ENCODE measurements at regions of chr13 and their contacts with region 1.

Region 1: DNA sequence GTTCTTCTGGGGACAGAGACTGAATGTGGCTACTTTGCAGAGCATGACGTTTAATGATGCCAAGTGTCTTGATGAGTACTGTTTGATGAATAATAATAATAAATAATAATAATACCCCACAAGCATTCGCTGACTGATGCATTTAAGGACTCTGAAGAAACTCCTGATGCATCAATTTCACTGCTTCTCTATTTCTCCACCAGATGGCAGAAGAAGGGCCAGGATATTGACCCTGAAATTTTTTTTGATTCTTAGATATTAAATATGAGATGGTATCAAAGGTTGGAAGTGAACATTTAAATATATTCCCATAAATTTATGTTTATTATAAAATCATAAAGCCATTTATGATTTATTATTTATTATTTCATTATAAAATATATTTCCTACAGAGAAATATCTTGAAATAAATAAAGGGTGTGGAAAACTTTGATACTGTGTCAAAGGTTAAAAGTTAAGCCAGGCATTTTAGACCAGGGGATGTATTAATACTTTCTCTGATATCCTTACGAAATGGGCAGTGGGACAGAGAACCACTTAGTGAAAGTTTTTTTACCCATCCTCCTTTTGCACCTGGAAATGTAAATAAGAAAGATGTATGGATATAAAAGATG is 170.9 kb downstream of the LACC1 start:
- DNase-seq: no peak
- H3K4me3 ChIP-seq: no peak overlapping the region
- H3K27ac ChIP-seq: no peak overlapping the region
- H3K4me1 ChIP-seq: peaks cover 5% of the 10 kb centered on the region
- H3K27me3 ChIP-seq: no peaks in the 10 kb centered on the region
- CTCF ChIP-seq: peak; percentile 41 to 76 (median 61)
- EP300 ChIP-seq: no peak
- POLR2A ChIP-seq: no peak

Region 2: DNA sequence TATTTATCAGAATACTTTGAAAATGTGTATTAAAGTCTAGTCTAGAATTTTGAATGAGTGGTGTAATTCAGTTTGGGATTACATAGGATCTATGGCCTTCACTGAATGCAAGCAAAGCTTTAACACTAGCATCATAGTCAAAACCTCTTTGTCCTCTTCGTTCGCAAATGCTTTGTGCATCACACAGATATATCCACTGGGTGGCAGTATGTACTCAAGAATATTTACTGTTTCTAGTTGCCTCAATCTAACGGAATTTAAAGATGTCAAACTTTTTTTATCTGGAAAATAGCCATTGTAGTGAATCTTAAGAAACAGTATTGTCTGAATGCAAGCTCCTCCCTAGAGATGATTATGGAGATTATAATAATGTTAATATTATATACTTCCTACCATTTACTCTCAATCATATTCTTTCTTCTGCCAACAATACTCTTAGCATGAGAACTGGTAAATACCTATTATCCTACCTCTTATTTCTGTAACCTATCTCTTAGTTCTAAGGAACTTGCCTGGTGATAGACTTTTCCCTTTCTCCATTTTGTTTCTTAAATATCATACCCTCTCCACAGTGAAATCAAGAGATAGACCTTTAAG is 145.0 kb before region 1 on chr13:
- intact Hi-C with region 1: loop called in 2 of 4 experiments (anchors 10 kb)
- DNase-seq: peak in 1 of 5 donors; percentile 44
- H3K4me3 ChIP-seq: no peak overlapping the region
- H3K27ac ChIP-seq: no peak overlapping the region
- H3K4me1 ChIP-seq: no peaks in the 10 kb centered on the region
- H3K27me3 ChIP-seq: no peaks in the 10 kb centered on the region
- CTCF ChIP-seq: peak in 2 of 3 donors; percentile 74 to 85
- EP300 ChIP-seq: no peak
- POLR2A ChIP-seq: no peak

Region 3: GRCh38 chr13:43915451-43915850 is 135.1 kb before region 1 on chr13:
- intact Hi-C with region 1: loop called in 1 of 4 experiments (anchors 10 kb)
- DNase-seq: no peak
- H3K4me3 ChIP-seq: no peak overlapping the region
- H3K27ac ChIP-seq: no peak overlapping the region
- H3K4me1 ChIP-seq: no peaks in the 10 kb centered on the region
- H3K27me3 ChIP-seq: no peaks in the 10 kb centered on the region
- CTCF ChIP-seq: no peak
- EP300 ChIP-seq: no peak
- POLR2A ChIP-seq: no peak

Measured in ovary (tissue), 10 donors.